ENCODE measurements at regions of chr2 and their contacts with region 1.

Region 1: GRCh38 chr2:88159955-88160415 is 10.2 kb upstream of the THNSL2 start:
- DNase-seq: peak; percentile 44
- H3K4me3 ChIP-seq: no peak overlapping the region
- CTCF ChIP-seq: peak; percentile 83

Region 2: DNA sequence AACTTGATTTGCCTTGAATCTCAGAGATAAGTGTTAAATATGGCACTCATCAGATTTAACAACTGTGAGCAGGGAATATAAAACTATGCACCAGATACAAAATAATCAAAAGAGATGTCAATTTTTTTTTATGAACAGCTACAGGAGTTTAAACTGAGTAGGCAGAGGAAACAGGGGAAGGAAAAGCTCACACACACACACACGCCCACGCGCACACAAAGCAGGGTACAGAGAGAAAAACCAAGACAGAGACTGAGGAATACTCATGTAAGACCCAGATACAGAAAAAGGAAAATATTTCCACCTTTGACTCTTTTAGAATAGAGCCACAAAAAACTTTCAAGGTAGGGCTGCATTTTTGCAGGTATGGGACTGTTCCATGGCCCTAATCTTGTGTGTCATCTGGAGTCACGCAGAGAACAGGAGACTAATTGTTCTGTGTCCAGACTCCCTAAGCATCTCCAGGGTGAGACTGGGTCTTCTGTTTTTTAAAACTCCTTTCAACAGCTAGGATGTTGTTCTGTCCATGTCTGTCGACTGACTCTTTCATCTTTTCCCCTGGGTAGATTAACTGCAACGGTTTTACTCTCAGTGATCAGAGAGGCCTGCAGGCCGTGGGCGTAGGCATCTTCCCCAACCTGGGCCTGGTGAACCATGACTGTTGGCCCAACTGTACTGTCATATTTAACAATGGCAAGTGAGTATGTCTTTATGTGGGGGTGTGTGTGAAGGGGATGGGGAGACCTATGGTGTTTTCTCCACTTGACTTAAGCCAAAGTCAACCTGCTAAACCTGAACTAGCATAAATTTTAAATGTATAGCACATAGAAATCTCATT is 69.3 kb before region 1 on chr2:
- in situ Hi-C with region 1: loop called (anchors 5 kb)
- DNase-seq: no peak
- H3K4me3 ChIP-seq: no peak overlapping the region
- CTCF ChIP-seq: no peak

Region 3: DNA sequence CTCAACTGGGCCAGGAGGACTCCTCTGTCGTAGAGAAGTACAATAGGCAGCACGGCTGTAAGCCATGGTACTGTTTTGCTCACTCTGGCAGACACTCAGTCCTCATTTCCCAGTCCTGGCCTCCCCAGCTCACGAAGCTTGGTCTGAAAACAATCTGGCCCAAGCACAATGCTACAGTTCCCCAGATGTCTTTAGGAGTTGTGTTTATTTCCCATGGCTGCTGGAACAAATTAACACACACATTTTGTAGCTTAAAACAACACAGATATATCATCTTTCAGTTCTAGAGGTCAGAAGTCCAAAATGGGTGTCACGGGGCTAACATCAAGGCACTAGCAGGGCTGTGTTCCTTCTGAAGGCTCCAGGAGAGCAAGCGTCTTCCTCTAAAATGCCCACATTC is 45.1 kb before region 1 on chr2:
- in situ Hi-C with region 1: no loop called
- DNase-seq: no peak
- H3K4me3 ChIP-seq: no peak overlapping the region
- CTCF ChIP-seq: no peak